Activated CD4-positive, alpha-beta T cell treated with anti-CD3 and anti-CD28 coated beads for 36 hours (primary cell): ENCODE measurements at regions of chr9 and their contacts with region 1.

Region 1: GRCh38 chr9:29160763-29161353 is 1587.6 kb upstream of the C9orf72 start:
- DNase-seq: no peak
- ATAC-seq: no peak
- H3K4me3 Mint-ChIP-seq: no peak overlapping the region
- H3K27ac Mint-ChIP-seq: no peak overlapping the region
- H3K4me1 Mint-ChIP-seq: no peaks in the 10 kb centered on the region
- H3K27me3 Mint-ChIP-seq: no peaks in the 10 kb centered on the region

Region 2: GRCh38 chr9:29144476-29144875 is 16.4 kb before region 1 on chr9:
- CTCF ChIA-PET with region 1: no interaction called
- POLR2A ChIA-PET with region 1: no interaction called
- intact Hi-C with region 1: loop called in 1 of 2 experiments (anchors 2 kb)
- DNase-seq: no peak
- ATAC-seq: no peak
- H3K4me3 Mint-ChIP-seq: no peak overlapping the region
- H3K27ac Mint-ChIP-seq: no peak overlapping the region
- H3K4me1 Mint-ChIP-seq: no peaks in the 10 kb centered on the region
- H3K27me3 Mint-ChIP-seq: no peaks in the 10 kb centered on the region

Region 3: DNA sequence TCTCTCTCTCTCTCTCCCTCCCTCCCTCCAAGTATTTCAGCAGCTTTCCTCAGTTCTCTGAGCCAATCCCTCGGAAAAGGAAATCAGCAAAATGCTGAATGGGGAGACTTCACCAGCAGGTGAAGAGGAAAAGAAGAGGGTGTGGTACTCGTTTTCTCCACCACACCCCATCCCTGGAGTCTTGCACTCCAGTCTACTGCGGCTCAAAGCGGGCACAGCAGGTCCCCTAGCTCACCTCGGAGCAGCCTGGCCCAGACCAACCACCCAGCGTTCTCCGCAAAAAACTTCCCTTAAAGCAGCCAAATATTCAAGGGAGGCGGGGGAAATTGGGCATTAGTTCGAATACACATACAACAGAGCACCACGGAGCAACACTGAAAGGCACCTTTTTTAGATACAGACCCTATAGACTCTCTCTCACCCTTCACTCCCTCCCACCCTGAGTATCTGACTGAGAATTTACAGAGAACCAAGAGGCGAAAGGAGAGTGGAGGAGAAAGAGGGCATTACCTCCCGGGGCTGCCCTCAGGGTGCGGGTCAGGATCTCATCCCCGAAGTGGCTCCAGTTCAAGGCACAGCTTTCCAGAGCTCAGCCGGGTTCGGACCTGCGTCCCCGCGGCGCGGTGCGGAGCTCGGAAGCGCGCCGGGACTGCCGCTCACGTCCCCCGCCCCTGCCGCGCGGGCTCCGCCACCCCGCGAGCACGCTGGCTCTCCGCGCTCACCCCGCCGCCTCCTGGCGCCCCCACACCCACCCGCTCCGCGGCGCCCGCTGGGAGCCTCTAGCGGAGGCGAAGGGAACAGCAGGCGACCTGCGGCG is 50.9 kb after region 1 on chr9:
- CTCF ChIA-PET with region 1: no interaction called
- POLR2A ChIA-PET with region 1: no interaction called
- intact Hi-C with region 1: no loop called
- DNase-seq: peak; percentile 63
- ATAC-seq: peak; percentile 81
- H3K4me3 Mint-ChIP-seq: no peak overlapping the region
- H3K27ac Mint-ChIP-seq: no peak overlapping the region
- H3K4me1 Mint-ChIP-seq: peaks cover 10% of the 10 kb centered on the region
- H3K27me3 Mint-ChIP-seq: peaks cover 55% of the 10 kb centered on the region